ENCODE measurements at regions of chr9 and their contacts with region 1.

Region 1: DNA sequence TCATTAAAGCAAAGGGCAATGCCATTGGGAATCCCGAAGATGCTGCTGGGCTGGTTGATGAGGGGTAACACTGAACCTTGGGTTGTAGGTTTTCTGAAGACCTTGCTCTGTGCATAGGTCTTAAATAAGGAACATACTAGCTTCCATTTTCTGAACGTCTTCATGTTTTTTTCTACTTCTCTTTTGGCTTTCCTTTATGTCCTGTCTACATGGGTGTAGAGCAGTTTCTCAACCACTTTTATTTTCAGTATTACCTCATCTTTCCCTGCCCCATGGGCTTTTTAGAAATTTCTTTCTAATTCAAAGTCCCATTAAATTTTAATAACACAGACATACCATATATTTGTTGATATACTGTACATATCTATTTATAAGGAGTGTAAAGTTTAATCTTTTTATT is at the start of gene IFNA14:
- DNase-seq: no peak
- ATAC-seq: no peak
- H3K4me3 ChIP-seq: no peak within 1 kb of the TSS
- H3K4me3 Mint-ChIP-seq: no peak within 1 kb of the TSS
- H3K27ac ChIP-seq: no peak within 1 kb of the TSS
- H3K27ac Mint-ChIP-seq: no peak within 1 kb of the TSS
- H3K4me1 ChIP-seq: peaks cover 0 to 5% of the 10 kb centered on the region in 2 donors
- H3K4me1 Mint-ChIP-seq: peaks cover 6 to 19% (median 12%) of the 10 kb centered on the region in 7 donors
- H3K27me3 ChIP-seq: peaks cover 0 to 2% of the 10 kb centered on the region in 2 donors
- H3K27me3 Mint-ChIP-seq: peaks cover 14 to 53% (median 15%) of the 10 kb centered on the region in 5 donors
- total RNA-seq, gene IFNA14: not detected

Region 2: DNA sequence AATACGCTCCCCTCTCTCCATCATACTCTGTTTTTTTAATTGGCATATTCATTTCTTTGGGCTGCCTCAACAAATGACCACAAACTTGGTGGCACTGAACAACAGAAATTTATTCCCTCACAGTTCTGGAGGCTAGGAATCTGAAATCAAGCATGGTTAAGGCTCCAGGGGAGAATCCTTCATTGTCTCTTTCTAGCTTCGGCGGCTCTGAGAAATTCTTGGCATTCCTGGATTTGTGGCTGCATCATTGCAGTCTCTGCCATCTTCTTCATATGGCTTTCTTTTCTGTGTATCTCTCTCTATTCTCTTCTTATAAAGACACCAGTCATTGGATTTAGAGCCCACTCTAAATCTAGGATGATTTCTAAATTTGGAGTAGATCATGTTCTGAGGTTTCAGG is 1440.1 kb before region 1 on chr9:
- CTCF ChIA-PET with region 1: no interaction called
- POLR2A ChIA-PET with region 1: no interaction called
- intact Hi-C with region 1: no loop called
- DNase-seq: no peak
- ATAC-seq: no peak
- H3K4me3 ChIP-seq: no peak overlapping the region
- H3K4me3 Mint-ChIP-seq: no peak overlapping the region
- H3K27ac ChIP-seq: no peak overlapping the region
- H3K27ac Mint-ChIP-seq: no peak overlapping the region
- H3K4me1 ChIP-seq: no peaks in the 10 kb centered on the region
- H3K4me1 Mint-ChIP-seq: no peaks in the 10 kb centered on the region
- H3K27me3 ChIP-seq: no peaks in the 10 kb centered on the region
- H3K27me3 Mint-ChIP-seq: peaks cover 15 to 23% (median 20%) of the 10 kb centered on the region in 5 donors

Region 3: DNA sequence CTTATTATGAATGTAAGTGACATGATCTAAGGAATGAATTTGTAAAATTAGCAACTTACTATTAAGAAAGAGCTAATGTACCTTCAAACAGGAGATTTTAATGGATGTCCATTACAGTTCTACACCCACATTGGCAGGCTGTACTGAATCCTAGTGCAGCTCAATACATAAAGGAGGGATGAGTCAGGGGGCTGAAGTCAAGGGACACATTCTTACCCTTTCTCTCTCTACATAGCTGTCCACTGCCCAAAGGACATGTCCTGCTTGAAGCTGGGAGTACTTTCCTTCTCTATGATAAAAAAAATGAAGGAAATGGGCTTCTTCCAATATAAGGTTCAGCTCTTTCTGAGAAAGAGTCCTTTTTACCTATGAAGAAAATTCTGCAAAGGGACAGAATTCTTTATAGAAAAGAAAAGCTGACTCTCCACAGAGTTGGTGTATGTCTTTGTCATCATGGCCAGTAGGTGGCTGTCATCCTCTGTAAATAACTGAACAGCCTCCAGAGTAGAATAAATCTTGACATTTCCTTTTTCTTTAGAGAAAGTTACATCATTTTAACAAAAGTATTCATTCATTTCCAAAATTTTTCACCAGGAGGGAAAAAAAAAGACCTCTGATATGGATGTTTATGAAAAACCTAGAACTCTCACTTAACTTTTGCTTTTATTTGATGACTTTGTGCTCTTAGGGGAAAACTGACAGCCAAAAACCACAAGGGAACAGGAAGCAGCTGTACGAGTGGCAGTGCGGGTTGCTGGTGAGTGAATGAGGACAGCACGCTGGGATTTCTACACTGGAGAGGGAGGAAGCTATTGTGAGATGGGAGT is 13.0 kb after region 1 on chr9:
- CTCF ChIA-PET with region 1: interaction called, 10 read pairs
- POLR2A ChIA-PET with region 1: no interaction called
- intact Hi-C with region 1: no loop called
- DNase-seq: peak in 5 of 9 donors; percentile 7 to 23 (median 12)
- ATAC-seq: peak; percentile 78
- H3K4me3 ChIP-seq: no peak overlapping the region
- H3K4me3 Mint-ChIP-seq: peak overlapping the region in 6 of 10 donors; percentile 4 to 52 (median 21)
- H3K27ac ChIP-seq: no peak overlapping the region
- H3K27ac Mint-ChIP-seq: no peak overlapping the region
- H3K4me1 ChIP-seq: peaks cover 0 to 3% of the 10 kb centered on the region in 2 donors
- H3K4me1 Mint-ChIP-seq: peaks cover 4 to 14% (median 6%) of the 10 kb centered on the region in 7 donors
- H3K27me3 ChIP-seq: no peaks in the 10 kb centered on the region
- H3K27me3 Mint-ChIP-seq: peaks cover 4 to 60% (median 16%) of the 10 kb centered on the region in 5 donors

Region 4: GRCh38 chr9:21709464-21710058 is 469.6 kb after region 1 on chr9:
- CTCF ChIA-PET with region 1: interaction called, 3 read pairs
- POLR2A ChIA-PET with region 1: no interaction called
- intact Hi-C with region 1: loop called in 1 of 2 experiments (anchors 1 kb)
- DNase-seq: peak; percentile 14 to 56 (median 46)
- ATAC-seq: peak; percentile 88
- H3K4me3 ChIP-seq: no peak overlapping the region
- H3K4me3 Mint-ChIP-seq: no peak overlapping the region
- H3K27ac ChIP-seq: no peak overlapping the region
- H3K27ac Mint-ChIP-seq: no peak overlapping the region
- H3K4me1 ChIP-seq: no peaks in the 10 kb centered on the region
- H3K4me1 Mint-ChIP-seq: peaks cover 0 to 22% (median 15%) of the 10 kb centered on the region in 7 donors
- H3K27me3 ChIP-seq: no peaks in the 10 kb centered on the region
- H3K27me3 Mint-ChIP-seq: peaks cover 0 to 27% (median 0%) of the 10 kb centered on the region in 5 donors

Region 5: GRCh38 chr9:22452415-22453010 is 1212.6 kb after region 1 on chr9:
- CTCF ChIA-PET with region 1: no interaction called
- POLR2A ChIA-PET with region 1: no interaction called
- intact Hi-C with region 1: loop called in 1 of 2 experiments (anchors 1 kb)
- DNase-seq: peak in 5 of 9 donors; percentile 8 to 31 (median 11)
- ATAC-seq: peak; percentile 70
- H3K4me3 ChIP-seq: no peak overlapping the region
- H3K4me3 Mint-ChIP-seq: no peak overlapping the region
- H3K27ac ChIP-seq: no peak overlapping the region
- H3K27ac Mint-ChIP-seq: no peak overlapping the region
- H3K4me1 ChIP-seq: no peaks in the 10 kb centered on the region
- H3K4me1 Mint-ChIP-seq: peaks cover 0 to 5% (median 2%) of the 10 kb centered on the region in 7 donors
- H3K27me3 ChIP-seq: peaks cover 6 to 10% of the 10 kb centered on the region in 2 donors
- H3K27me3 Mint-ChIP-seq: peaks cover 28 to 65% (median 37%) of the 10 kb centered on the region in 5 donors